CD8-positive, alpha-beta T cell (primary cell): ENCODE measurements at regions of chr17 and their contacts with region 1.

Region 1: GRCh38 chr17:2101448-2102257 is 46.8 kb downstream of the HIC1 start:
- DNase-seq: peak in 8 of 9 experiments; percentile 39 to 81 (median 63)
- ATAC-seq: peak; percentile 83
- H3K4me3 ChIP-seq: no peak overlapping the region
- H3K4me3 Mint-ChIP-seq: peak overlapping the region; percentile 2
- H3K27ac ChIP-seq: peak overlapping the region; percentile 16 to 31
- H3K27ac Mint-ChIP-seq: peak overlapping the region; percentile 63
- H3K4me1 ChIP-seq: peaks cover 20% of the 10 kb centered on the region
- H3K4me1 Mint-ChIP-seq: peaks cover 18% of the 10 kb centered on the region
- H3K27me3 ChIP-seq: no peaks in the 10 kb centered on the region
- H3K27me3 Mint-ChIP-seq: no peaks in the 10 kb centered on the region
- CTCF ChIP-seq: no peak

Region 2: DNA sequence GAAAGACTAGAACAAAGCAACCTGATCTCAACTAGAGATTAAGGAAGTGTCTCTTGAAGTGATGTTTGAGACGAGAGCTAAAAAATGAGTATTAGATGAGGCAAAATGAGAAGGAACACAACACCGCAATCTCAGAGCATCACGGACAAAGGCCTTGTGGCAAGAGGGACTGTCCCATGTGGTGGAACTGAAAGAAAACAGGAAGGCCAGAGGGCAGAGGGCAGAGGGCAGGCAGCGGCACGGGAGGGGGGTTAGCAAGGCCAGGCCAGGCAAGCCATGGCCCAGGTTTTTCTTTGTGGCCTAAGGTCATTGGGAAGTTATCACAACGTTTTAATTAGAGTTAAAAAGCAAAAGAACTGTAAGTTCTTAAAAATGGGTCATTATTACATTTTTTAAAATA is 249.3 kb before region 1 on chr17:
- CTCF ChIA-PET with region 1: no interaction called
- POLR2A ChIA-PET with region 1: no interaction called
- intact Hi-C with region 1: no loop called
- DNase-seq: no peak
- ATAC-seq: no peak
- H3K4me3 ChIP-seq: no peak overlapping the region
- H3K4me3 Mint-ChIP-seq: no peak overlapping the region
- H3K27ac ChIP-seq: no peak overlapping the region
- H3K27ac Mint-ChIP-seq: peak overlapping the region; percentile 63
- H3K4me1 ChIP-seq: no peaks in the 10 kb centered on the region
- H3K4me1 Mint-ChIP-seq: no peaks in the 10 kb centered on the region
- H3K27me3 ChIP-seq: no peaks in the 10 kb centered on the region
- H3K27me3 Mint-ChIP-seq: no peaks in the 10 kb centered on the region
- CTCF ChIP-seq: no peak

Region 3: DNA sequence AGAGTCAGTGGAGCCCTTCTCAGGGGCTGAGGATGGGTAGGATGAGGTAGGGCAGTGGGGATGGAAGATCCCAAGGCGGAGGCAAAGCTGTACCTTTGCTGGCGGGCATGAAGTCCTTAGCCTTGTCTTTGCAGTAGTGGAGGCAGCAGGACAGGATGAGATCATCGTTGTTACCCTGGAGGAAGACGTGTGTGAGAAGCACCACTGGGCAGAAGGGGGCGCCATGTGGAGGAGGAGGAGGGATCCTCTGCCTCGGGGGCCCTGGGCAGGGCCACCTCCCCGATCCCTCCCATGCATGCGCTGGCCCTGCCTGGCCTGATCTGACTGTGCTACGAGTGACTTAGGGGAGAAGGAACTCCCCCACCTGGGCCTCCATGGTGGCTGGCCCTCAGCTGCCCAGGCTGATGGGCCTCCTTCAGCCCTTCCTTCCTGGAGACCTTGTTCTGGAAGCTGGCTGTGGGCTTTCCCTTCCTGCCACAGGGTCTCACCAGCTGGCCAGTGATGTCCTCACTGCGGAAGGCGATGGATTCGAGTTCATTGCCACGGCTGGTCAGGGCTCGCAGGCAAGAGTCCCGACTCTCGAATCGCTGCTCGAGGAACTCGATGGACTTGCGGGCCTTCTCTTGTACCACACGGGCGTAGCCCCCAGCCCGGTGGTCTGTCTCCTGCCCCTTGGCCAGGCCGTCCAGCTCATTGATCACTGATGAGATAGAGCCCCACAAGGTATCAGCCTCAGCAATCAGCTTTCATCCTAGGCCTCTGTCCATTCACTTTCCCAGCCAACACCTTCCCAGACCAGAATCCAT is 36.5 kb before region 1 on chr17:
- CTCF ChIA-PET with region 1: no interaction called
- POLR2A ChIA-PET with region 1: no interaction called
- intact Hi-C with region 1: loop called in 1 of 2 experiments (anchors 5 kb)
- DNase-seq: peak in 5 of 9 experiments; percentile 47 to 62 (median 56)
- ATAC-seq: peak; percentile 58
- H3K4me3 ChIP-seq: no peak overlapping the region
- H3K4me3 Mint-ChIP-seq: no peak overlapping the region
- H3K27ac ChIP-seq: no peak overlapping the region
- H3K27ac Mint-ChIP-seq: peak overlapping the region; percentile 67
- H3K4me1 ChIP-seq: peaks cover 7% of the 10 kb centered on the region
- H3K4me1 Mint-ChIP-seq: peaks cover 36% of the 10 kb centered on the region
- H3K27me3 ChIP-seq: no peaks in the 10 kb centered on the region
- H3K27me3 Mint-ChIP-seq: peaks cover 16% of the 10 kb centered on the region
- CTCF ChIP-seq: no peak

Region 4: DNA sequence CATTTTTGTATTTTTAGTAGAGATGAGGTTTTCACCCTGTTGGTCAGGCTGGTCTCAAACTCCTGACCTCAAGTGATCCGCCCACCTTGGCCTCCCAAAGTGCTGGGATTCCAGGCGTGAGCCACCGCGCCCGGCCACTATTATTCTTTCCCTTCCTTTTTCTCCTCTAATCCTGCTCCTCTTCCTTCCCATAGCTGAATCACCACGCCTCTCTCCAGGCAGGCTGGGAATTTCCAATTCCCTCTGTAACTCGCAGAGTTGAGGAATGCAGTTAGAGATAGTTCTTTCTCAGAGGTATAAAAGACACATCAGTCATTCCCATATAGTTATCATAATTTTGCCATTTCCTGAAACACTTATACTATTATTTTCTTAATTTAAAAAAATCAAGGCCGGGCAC is 398.8 kb after region 1 on chr17:
- CTCF ChIA-PET with region 1: no interaction called
- POLR2A ChIA-PET with region 1: no interaction called
- intact Hi-C with region 1: no loop called
- DNase-seq: peak in 1 of 9 experiments; percentile 1
- ATAC-seq: no peak
- H3K4me3 ChIP-seq: no peak overlapping the region
- H3K4me3 Mint-ChIP-seq: no peak overlapping the region
- H3K27ac ChIP-seq: no peak overlapping the region
- H3K27ac Mint-ChIP-seq: no peak overlapping the region
- H3K4me1 ChIP-seq: no peaks in the 10 kb centered on the region
- H3K4me1 Mint-ChIP-seq: peaks cover 28% of the 10 kb centered on the region
- H3K27me3 ChIP-seq: no peaks in the 10 kb centered on the region
- H3K27me3 Mint-ChIP-seq: no peaks in the 10 kb centered on the region
- CTCF ChIP-seq: no peak